ENCODE measurements at regions of chr9 and their contacts with region 1.

Region 1: GRCh38 chr9:75265525-75265972 is 177.2 kb downstream of the OSTF1 start:
- DNase-seq: peak; percentile 23 to 45 (median 27)
- H3K4me3 ChIP-seq: no peak overlapping the region
- H3K4me3 Mint-ChIP-seq: no peak overlapping the region
- H3K27ac ChIP-seq: no peak overlapping the region
- H3K27ac Mint-ChIP-seq: no peak overlapping the region
- H3K4me1 ChIP-seq: no peaks in the 10 kb centered on the region
- H3K4me1 Mint-ChIP-seq: peaks cover 1% of the 10 kb centered on the region
- H3K27me3 ChIP-seq: no peaks in the 10 kb centered on the region
- H3K27me3 Mint-ChIP-seq: no peaks in the 10 kb centered on the region
- CTCF ChIP-seq: peak; percentile 88

Region 2: DNA sequence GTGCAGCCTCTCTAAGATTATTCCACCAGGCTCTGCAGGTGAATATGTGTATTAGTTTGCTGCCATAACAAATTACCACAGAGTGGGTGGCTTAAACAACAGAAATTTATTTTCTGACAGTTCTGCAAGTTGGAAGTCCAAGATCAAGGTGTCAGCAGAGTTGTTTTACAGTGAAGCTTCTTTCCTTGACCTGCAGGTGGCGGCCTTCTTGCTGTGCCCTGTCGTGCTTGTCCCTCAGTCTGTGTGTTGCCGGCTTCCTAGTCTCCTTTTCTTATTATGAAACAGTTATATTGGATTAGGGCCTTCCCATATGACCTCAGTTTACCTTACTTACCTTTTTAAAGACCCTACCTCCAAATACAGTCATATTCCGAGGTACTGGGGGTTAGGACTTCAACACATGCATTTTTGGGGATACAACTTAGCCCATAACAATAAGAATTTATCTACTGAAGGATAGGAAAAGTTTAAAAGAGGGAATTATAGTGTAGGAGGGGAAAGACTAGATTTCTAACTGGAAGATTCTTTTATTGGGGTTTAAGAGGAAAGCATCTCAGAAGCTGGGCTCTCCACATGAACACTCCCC is 79.9 kb before region 1 on chr9:
- intact Hi-C with region 1: no loop called
- DNase-seq: peak in 2 of 3 donors; percentile 19 to 31
- H3K4me3 ChIP-seq: no peak overlapping the region
- H3K4me3 Mint-ChIP-seq: no peak overlapping the region
- H3K27ac ChIP-seq: no peak overlapping the region
- H3K27ac Mint-ChIP-seq: no peak overlapping the region
- H3K4me1 ChIP-seq: peaks cover 0 to 3% of the 10 kb centered on the region in 2 donors
- H3K4me1 Mint-ChIP-seq: peaks cover 2% of the 10 kb centered on the region
- H3K27me3 ChIP-seq: no peaks in the 10 kb centered on the region
- H3K27me3 Mint-ChIP-seq: no peaks in the 10 kb centered on the region
- CTCF ChIP-seq: peak; percentile 80

Region 3: GRCh38 chr9:76297721-76298239 is 1032.2 kb after region 1 on chr9:
- intact Hi-C with region 1: loop called (anchors 2 to 5 kb)
- DNase-seq: no peak
- H3K4me3 ChIP-seq: no peak overlapping the region
- H3K4me3 Mint-ChIP-seq: peak overlapping the region; percentile 42 to 70
- H3K27ac ChIP-seq: no peak overlapping the region
- H3K27ac Mint-ChIP-seq: no peak overlapping the region
- H3K4me1 ChIP-seq: peaks cover 0 to 6% of the 10 kb centered on the region in 2 donors
- H3K4me1 Mint-ChIP-seq: peaks cover 16% of the 10 kb centered on the region
- H3K27me3 ChIP-seq: no peaks in the 10 kb centered on the region
- H3K27me3 Mint-ChIP-seq: peaks cover 0 to 7% (median 6%) of the 10 kb centered on the region in 3 donors
- CTCF ChIP-seq: no peak

Region 4: DNA sequence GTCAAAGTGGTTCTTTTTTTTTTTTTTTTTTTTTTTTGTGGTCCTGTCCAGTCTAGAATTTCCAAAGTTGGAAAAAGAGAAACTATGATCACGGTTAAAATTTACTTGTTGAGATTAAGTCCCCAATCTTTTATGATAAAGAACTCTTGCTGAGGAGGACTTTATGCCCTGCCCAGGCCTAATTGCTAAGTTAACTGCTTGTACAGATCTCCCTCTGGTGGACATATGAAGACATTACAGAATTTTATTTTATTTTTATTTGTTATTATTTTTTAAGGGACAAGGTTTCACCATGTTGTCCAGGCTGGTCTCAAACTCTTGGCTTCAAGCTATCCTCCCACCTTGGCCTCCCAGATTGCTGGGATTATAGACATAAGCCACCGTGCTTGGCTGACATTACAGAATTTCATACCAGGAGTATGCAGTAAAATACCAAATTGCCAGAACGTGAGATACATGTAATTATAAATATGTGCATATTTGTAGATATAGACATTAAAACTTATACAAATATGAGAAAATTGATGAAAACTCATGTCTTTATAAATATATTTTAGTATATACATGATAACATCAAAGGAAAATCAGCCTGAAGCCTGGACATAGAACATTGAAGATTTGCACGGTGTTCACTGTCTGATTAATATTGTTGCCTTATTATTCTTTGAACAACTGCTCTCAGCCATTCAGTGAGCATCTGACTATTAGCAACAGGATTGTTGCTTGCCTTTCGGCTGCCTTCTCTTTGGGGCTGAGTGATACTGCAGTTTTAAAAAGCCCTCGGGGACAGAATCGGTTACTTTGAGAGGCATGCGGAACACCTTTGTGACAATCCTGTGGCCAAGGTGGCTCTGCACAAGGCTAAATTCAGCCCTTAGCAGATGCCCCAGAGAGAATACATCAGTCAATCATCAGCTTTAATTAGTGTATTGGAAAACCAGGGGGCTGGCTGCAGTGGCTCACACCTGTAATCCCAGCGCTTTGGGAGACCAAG is 1037.7 kb after region 1 on chr9:
- intact Hi-C with region 1: loop called (anchors 2 to 5 kb)
- DNase-seq: peak; percentile 25 to 58 (median 45)
- H3K4me3 ChIP-seq: no peak overlapping the region
- H3K4me3 Mint-ChIP-seq: no peak overlapping the region
- H3K27ac ChIP-seq: no peak overlapping the region
- H3K27ac Mint-ChIP-seq: no peak overlapping the region
- H3K4me1 ChIP-seq: no peaks in the 10 kb centered on the region
- H3K4me1 Mint-ChIP-seq: no peaks in the 10 kb centered on the region
- H3K27me3 ChIP-seq: no peaks in the 10 kb centered on the region
- H3K27me3 Mint-ChIP-seq: peaks cover 0 to 3% (median 0%) of the 10 kb centered on the region in 3 donors
- CTCF ChIP-seq: peak; percentile 75

Region 5: GRCh38 chr9:76311586-76311985 is 1046.0 kb after region 1 on chr9:
- intact Hi-C with region 1: loop called in 1 of 2 experiments (anchors 5 kb)
- DNase-seq: no peak
- H3K4me3 ChIP-seq: no peak overlapping the region
- H3K4me3 Mint-ChIP-seq: no peak overlapping the region
- H3K27ac ChIP-seq: no peak overlapping the region
- H3K27ac Mint-ChIP-seq: no peak overlapping the region
- H3K4me1 ChIP-seq: no peaks in the 10 kb centered on the region
- H3K4me1 Mint-ChIP-seq: no peaks in the 10 kb centered on the region
- H3K27me3 ChIP-seq: no peaks in the 10 kb centered on the region
- H3K27me3 Mint-ChIP-seq: peaks cover 0 to 3% (median 2%) of the 10 kb centered on the region in 3 donors
- CTCF ChIP-seq: no peak

Region 6: GRCh38 chr9:76704593-76705204 is 1439.2 kb after region 1 on chr9:
- intact Hi-C with region 1: loop called in 1 of 2 experiments (anchors 10 kb)
- DNase-seq: peak; percentile 55 to 72 (median 66)
- H3K4me3 ChIP-seq: no peak overlapping the region
- H3K4me3 Mint-ChIP-seq: peak overlapping the region in 1 of 2 donors; percentile 32
- H3K27ac ChIP-seq: no peak overlapping the region
- H3K27ac Mint-ChIP-seq: peak overlapping the region in 1 of 7 donors; percentile 28
- H3K4me1 ChIP-seq: no peaks in the 10 kb centered on the region
- H3K4me1 Mint-ChIP-seq: peaks cover 31% of the 10 kb centered on the region
- H3K27me3 ChIP-seq: no peaks in the 10 kb centered on the region
- H3K27me3 Mint-ChIP-seq: peaks cover 2 to 19% (median 3%) of the 10 kb centered on the region in 3 donors
- CTCF ChIP-seq: peak; percentile 87

Measured in CD14-positive monocyte (primary cell).